Panc1 (cell line): ENCODE measurements at regions of chr17 and their contacts with region 1.

Region 1: GRCh38 chr17:53426505-53426904 is 396.2 kb upstream of the KIF2B start:
- DNase-seq: no peak
- ATAC-seq: no peak
- H3K4me3 ChIP-seq: no peak overlapping the region
- H3K27ac ChIP-seq: no peak overlapping the region
- H3K4me1 ChIP-seq: no peaks in the 10 kb centered on the region
- H3K27me3 ChIP-seq: no peaks in the 10 kb centered on the region
- CTCF ChIP-seq: no peak

Region 2: GRCh38 chr17:53406907-53407306 is 19.6 kb before region 1 on chr17:
- CTCF ChIA-PET with region 1: no interaction called
- POLR2A ChIA-PET with region 1: no interaction called
- in situ Hi-C with region 1: no loop called
- intact Hi-C with region 1: no loop called
- DNase-seq: no peak
- ATAC-seq: no peak
- H3K4me3 ChIP-seq: no peak overlapping the region
- H3K27ac ChIP-seq: no peak overlapping the region
- H3K4me1 ChIP-seq: no peaks in the 10 kb centered on the region
- H3K27me3 ChIP-seq: no peaks in the 10 kb centered on the region
- CTCF ChIP-seq: no peak

Region 3: GRCh38 chr17:53548252-53548651 is 121.7 kb after region 1 on chr17:
- CTCF ChIA-PET with region 1: no interaction called
- POLR2A ChIA-PET with region 1: interaction called, 10 read pairs
- in situ Hi-C with region 1: no loop called
- intact Hi-C with region 1: no loop called
- DNase-seq: no peak
- ATAC-seq: no peak
- H3K4me3 ChIP-seq: no peak overlapping the region
- H3K27ac ChIP-seq: no peak overlapping the region
- H3K4me1 ChIP-seq: no peaks in the 10 kb centered on the region
- H3K27me3 ChIP-seq: no peaks in the 10 kb centered on the region
- CTCF ChIP-seq: no peak

Region 4: GRCh38 chr17:53655591-53655990 is 229.1 kb after region 1 on chr17:
- CTCF ChIA-PET with region 1: no interaction called
- POLR2A ChIA-PET with region 1: no interaction called
- in situ Hi-C with region 1: no loop called
- intact Hi-C with region 1: no loop called
- DNase-seq: no peak
- ATAC-seq: no peak
- H3K4me3 ChIP-seq: no peak overlapping the region
- H3K27ac ChIP-seq: no peak overlapping the region
- H3K4me1 ChIP-seq: no peaks in the 10 kb centered on the region
- H3K27me3 ChIP-seq: no peaks in the 10 kb centered on the region
- CTCF ChIP-seq: no peak